Right ventricle myocardium inferior (tissue), 1 donor: ENCODE measurements at regions of chr15 and their contacts with region 1.

Region 1: GRCh38 chr15:67065444-67066093 is at the start of gene SMAD3:
- DNase-seq: peak; percentile 93
- ATAC-seq: peak; percentile 95
- total RNA-seq, gene SMAD3: 18.0 TPM

Region 2: DNA sequence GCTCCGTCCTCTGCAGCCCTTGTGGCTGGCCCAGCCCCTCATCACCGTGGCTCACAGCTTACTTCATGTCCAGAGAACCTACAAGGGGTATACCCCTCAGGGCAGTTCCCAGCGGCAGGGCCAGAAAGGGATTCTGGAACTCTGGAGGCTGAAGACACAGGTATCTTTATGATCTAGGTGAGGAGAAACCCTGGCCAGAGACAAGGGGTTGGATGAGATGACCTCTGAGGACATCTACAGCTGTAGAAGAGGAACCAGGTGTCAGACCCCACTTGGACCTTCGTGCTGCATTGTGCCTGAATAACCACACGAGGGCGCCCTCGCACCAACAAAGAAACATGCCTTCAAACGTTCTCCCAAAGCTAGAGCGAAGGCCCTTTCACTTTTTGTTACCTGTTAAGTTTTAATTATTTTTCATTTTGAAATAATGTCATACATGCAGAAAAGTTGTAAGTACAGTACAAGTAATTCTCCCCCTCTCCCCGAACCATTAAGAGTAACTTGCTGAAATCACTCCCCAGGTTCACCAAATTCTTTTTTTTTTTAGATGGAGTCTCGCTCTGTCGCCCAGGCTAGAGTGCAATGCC is 118.9 kb before region 1 on chr15:
- intact Hi-C with region 1: loop called (anchors 10 kb)
- DNase-seq: peak; percentile 81
- ATAC-seq: peak; percentile 59

Region 3: GRCh38 chr15:66997212-66997611 is 68.4 kb before region 1 on chr15:
- intact Hi-C with region 1: no loop called
- DNase-seq: no peak
- ATAC-seq: no peak

Region 4: DNA sequence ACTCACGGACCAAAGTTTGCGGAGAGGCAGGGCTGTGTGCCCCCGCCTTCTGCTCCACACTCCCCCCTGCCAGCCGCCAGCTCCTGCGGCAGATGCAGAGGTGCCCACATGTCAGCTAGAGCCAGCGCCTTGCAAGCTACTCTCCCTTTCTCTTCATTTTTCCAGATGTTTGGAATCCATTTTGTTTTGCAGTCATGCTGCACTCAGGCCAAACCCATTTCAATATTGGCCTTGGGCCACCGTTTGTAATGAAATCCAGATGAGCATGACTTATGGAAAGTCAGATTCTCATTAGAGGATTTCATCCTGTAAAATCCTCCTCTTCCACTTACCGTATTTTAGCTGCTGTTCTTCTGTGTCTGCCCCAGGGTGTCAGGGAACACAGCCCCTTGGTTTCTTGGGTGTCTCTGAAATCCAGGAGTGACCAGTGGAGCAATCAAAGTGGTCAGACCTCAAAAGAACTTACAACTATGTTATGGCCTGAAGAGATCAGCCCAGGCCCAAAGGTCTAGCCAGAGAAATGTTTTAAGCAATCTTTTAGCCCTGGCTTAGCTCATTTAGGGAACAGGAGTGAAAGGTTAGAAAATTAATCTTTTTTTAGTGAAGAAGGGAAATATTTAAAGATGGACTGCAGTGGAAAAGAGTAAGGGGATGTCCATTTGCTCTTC is 123.1 kb after region 1 on chr15:
- intact Hi-C with region 1: loop called (anchors 2 kb)
- DNase-seq: no peak
- ATAC-seq: peak; percentile 4

Region 5: GRCh38 chr15:67254238-67255175 is 188.9 kb after region 1 on chr15 and contains the starts of genes AAGAB and IQCH:
- intact Hi-C with region 1: loop called (anchors 1 kb)
- DNase-seq: peak; percentile 99
- ATAC-seq: peak; percentile 100
- total RNA-seq, gene AAGAB: 20.9 TPM
- total RNA-seq, gene IQCH: 0.51 TPM

Region 6: GRCh38 chr15:67303490-67304363 is 238.2 kb after region 1 on chr15:
- intact Hi-C with region 1: loop called (anchors 5 kb)
- DNase-seq: no peak
- ATAC-seq: no peak